T-cell (primary cell): ENCODE measurements at regions of chr19 and their contacts with region 1.

Region 1: GRCh38 chr19:14048443-14049153 is 13.3 kb downstream of the PALM3 start:
- DNase-seq: peak; percentile 28 to 83 (median 69)
- ATAC-seq: peak; percentile 77 to 85 (median 82)
- H3K4me3 ChIP-seq: no peak overlapping the region
- H3K4me3 Mint-ChIP-seq: no peak overlapping the region
- H3K27ac ChIP-seq: peak overlapping the region; percentile 34
- H3K27ac Mint-ChIP-seq: peak overlapping the region; percentile 32 to 34
- H3K4me1 ChIP-seq: peaks cover 0 to 2% of the 10 kb centered on the region in 2 experiments
- H3K4me1 Mint-ChIP-seq: no peaks in the 10 kb centered on the region
- H3K27me3 ChIP-seq: no peaks in the 10 kb centered on the region
- H3K27me3 Mint-ChIP-seq: no peaks in the 10 kb centered on the region

Region 2: DNA sequence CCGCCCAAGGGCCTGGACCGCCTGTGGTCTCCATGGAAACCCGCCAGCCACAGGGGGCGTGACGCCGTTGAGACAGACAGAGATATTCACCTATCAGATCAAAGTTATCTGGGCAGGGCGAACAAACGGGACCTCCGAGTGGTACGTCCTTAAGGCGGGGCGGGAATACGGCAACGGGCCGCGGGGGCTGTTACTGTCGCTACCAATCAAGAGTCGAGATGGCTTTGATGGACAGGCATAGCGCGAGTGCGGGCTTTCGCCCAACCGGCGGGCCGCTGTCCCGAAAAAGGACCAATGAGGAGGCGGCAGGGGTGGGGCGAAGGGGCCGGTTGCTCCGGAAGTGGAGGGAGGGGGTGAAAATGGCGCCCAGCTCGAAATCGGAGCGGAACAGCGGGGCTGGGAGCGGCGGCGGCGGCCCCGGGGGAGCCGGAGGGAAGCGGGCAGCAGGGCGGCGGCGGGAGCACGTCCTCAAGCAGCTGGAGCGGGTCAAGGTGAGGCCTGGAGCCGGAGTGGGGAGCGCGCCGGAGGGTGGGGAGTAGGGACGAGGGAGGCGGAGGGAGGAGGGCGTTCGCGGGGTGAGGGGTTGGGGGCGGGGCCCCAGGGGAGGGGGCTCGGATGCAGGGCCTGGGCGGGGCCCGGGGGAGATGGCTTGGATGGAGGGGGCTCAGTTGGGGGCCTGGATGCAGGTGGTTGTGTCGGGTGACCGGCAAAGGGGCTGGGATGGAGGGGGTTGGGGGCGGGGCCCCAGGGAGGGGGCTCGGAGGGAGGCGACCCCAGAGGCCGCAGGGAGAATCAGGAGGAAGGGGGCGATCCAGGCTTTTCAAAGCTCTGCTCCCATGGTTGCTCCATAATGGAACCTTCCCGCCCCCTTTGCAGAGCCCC is 96.2 kb before region 1 on chr19 and contains the start of gene DCAF15:
- CTCF ChIA-PET with region 1: interaction called, 7 to 10 read pairs
- POLR2A ChIA-PET with region 1: no interaction called
- DNase-seq: peak; percentile 94 to 100 (median 99)
- ATAC-seq: peak; percentile 96 to 98 (median 98)
- H3K4me3 ChIP-seq: peak within 1 kb of the TSS; percentile 78 to 88
- H3K4me3 Mint-ChIP-seq: peak within 1 kb of the TSS; percentile 90 to 97 (median 91)
- H3K27ac ChIP-seq: peak within 1 kb of the TSS; percentile 68
- H3K27ac Mint-ChIP-seq: peak within 1 kb of the TSS; percentile 90 to 95
- H3K4me1 ChIP-seq: peaks cover 7 to 31% of the 10 kb centered on the region in 2 experiments
- H3K4me1 Mint-ChIP-seq: peaks cover 13 to 28% (median 23%) of the 10 kb centered on the region in 3 donors
- H3K27me3 ChIP-seq: no peaks in the 10 kb centered on the region
- H3K27me3 Mint-ChIP-seq: no peaks in the 10 kb centered on the region
- total RNA-seq, gene DCAF15: 67.3 to 118 (median 110) TPM

Region 3: GRCh38 chr19:14059093-14059480 is 10.5 kb after region 1 on chr19:
- CTCF ChIA-PET with region 1: interaction called, 4 to 6 read pairs
- POLR2A ChIA-PET with region 1: interaction called in 1 of 2 experiments, 10 read pairs
- DNase-seq: peak in 26 of 35 experiments; percentile 5 to 72 (median 45)
- ATAC-seq: peak in 1 of 4 experiments; percentile 61
- H3K4me3 ChIP-seq: no peak overlapping the region
- H3K4me3 Mint-ChIP-seq: peak overlapping the region; percentile 21 to 75 (median 37)
- H3K27ac ChIP-seq: no peak overlapping the region
- H3K27ac Mint-ChIP-seq: no peak overlapping the region
- H3K4me1 ChIP-seq: peaks cover 3 to 24% of the 10 kb centered on the region in 2 experiments
- H3K4me1 Mint-ChIP-seq: peaks cover 14 to 28% (median 23%) of the 10 kb centered on the region in 3 donors
- H3K27me3 ChIP-seq: peaks cover 4 to 61% of the 10 kb centered on the region in 2 experiments
- H3K27me3 Mint-ChIP-seq: peaks cover 19 to 33% of the 10 kb centered on the region in 2 donors